Heart left ventricle (tissue), 16 donors: ENCODE measurements at regions of chr2 and their contacts with region 1.

Region 1: GRCh38 chr2:25041928-25042320 is at the start of gene EFR3B:
- DNase-seq: peak; percentile 96 to 98 (median 97)
- ATAC-seq: peak; percentile 97 to 99 (median 98)
- H3K4me3 ChIP-seq: peak within 1 kb of the TSS; percentile 56 to 97 (median 84)
- H3K27ac ChIP-seq: peak within 1 kb of the TSS; percentile 71 to 92 (median 88)
- H3K4me1 ChIP-seq: peaks cover 0 to 26% (median 17%) of the 10 kb centered on the region in 12 donors
- H3K27me3 ChIP-seq: peaks cover 0 to 13% (median 0%) of the 10 kb centered on the region in 9 donors
- CTCF ChIP-seq: peak in 4 of 12 donors; percentile 2 to 12 (median 10)
- POLR2A ChIP-seq: peak in 1 of 2 donors; percentile 67
- total RNA-seq, gene EFR3B: 4.3 to 13.8 (median 6.3) TPM

Region 2: DNA sequence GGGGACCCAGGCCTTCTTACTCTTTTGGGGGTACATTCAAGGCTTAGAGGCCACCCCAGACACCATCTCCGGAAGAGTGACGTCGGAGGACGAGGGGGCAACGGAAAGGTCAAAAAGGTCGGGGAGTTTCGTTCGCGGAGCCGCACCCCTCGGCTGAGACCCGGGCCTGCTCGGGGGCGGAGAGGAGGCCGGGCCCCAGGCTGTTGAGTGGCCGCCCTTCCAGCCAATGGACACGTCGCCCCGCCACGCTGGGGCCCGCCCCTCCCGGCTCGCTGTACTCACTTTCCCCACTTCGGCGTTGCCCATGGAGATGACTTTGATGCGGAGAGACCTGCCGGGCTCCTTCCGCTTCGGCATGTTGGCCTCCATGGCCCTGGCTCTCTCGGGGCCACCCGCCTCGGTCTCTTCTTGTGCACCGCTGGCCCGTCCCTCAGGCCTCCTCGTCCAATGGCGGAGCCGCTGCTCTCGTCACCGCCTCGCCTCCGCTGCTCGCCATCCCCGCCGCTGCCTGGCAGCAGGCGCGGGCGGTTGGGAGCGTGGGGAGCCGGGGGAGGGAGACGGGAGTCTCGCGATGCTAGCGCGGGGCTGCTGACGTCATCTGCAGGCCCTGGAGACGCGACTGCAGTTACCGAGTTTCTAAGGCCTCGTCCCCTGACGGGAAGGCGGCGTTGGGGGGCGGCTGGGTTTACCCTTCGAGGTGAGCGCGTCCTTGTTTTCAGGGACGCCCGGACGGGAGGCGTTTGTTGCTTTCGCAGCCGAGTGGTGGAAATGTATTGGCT is 70.2 kb before region 1 on chr2 and contains the start of gene DNAJC27:
- intact Hi-C with region 1: loop called in 6 of 10 experiments (anchors 2 to 5 kb)
- DNase-seq: peak; percentile 98 to 99 (median 99)
- ATAC-seq: peak; percentile 95 to 97 (median 96)
- H3K4me3 ChIP-seq: peak within 1 kb of the TSS; percentile 70 to 94 (median 82)
- H3K27ac ChIP-seq: peak within 1 kb of the TSS; percentile 95 to 99 (median 98)
- H3K4me1 ChIP-seq: peaks cover 0 to 23% (median 13%) of the 10 kb centered on the region in 12 donors
- H3K27me3 ChIP-seq: no peaks in the 10 kb centered on the region
- CTCF ChIP-seq: no peak
- POLR2A ChIP-seq: peak; percentile 53 to 95
- total RNA-seq, gene DNAJC27: 5.1 to 13.6 (median 9.1) TPM

Region 3: GRCh38 chr2:24977631-24978030 is 64.3 kb before region 1 on chr2:
- intact Hi-C with region 1: loop called in 7 of 10 experiments (anchors 2 to 5 kb)
- DNase-seq: no peak
- ATAC-seq: no peak
- H3K4me3 ChIP-seq: no peak overlapping the region
- H3K27ac ChIP-seq: no peak overlapping the region
- H3K4me1 ChIP-seq: peaks cover 0 to 18% (median 6%) of the 10 kb centered on the region in 12 donors
- H3K27me3 ChIP-seq: no peaks in the 10 kb centered on the region
- CTCF ChIP-seq: no peak
- POLR2A ChIP-seq: no peak

Region 4: GRCh38 chr2:24984912-24985311 is 57.0 kb before region 1 on chr2:
- intact Hi-C with region 1: loop called in 4 of 10 experiments (anchors 2 to 5 kb)
- DNase-seq: peak in 4 of 5 donors; percentile 61 to 80 (median 74)
- ATAC-seq: peak; percentile 74 to 95 (median 94)
- H3K4me3 ChIP-seq: no peak overlapping the region
- H3K27ac ChIP-seq: peak overlapping the region; percentile 14 to 76 (median 62)
- H3K4me1 ChIP-seq: peaks cover 0 to 27% (median 18%) of the 10 kb centered on the region in 12 donors
- H3K27me3 ChIP-seq: no peaks in the 10 kb centered on the region
- CTCF ChIP-seq: no peak
- POLR2A ChIP-seq: no peak

Region 5: DNA sequence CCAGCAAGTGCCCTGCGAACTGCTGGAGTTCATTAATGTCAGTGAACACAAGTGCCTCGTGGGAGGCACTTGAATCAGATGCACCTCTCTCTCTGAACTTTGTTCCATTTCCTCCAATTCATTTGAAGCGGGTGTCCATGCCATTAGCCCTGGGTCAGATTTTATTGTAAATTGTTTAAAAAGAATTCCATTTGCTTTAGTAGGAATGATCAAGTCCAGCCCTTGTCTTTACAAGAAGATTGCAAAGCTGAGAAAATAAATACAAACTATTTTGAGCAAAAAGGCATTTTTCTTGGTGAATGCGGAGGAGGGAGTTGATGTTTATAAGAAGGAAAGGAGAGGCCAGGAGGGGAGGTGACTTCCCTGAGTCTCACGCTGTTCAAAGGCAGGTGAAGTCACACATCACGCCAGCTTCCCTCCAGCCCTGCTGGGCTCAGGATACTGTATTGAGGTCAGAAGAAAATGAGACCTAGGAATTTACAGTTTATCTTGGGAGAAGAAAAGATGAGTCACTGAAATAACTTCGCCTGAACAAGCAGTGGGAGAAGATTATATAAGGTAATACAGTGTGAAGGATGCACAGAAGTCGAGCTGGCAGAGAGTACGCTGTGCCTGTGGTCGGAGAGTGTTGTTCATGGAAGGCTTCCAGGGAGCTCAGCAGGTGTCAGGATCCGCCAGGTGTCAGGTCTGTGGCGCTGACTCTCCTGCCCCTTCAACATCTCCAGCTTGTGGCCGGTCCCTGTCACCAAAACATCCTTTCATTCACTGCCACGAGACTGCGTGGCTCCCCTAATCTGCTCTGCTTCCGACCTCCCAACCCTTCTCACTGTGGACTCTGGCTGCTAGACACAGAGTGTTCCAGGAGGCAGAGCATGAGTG is 36.5 kb after region 1 on chr2:
- intact Hi-C with region 1: loop called in 1 of 10 experiments (anchors 5 kb)
- DNase-seq: peak in 2 of 5 donors; percentile 26 to 41
- ATAC-seq: peak; percentile 43 to 89 (median 68)
- H3K4me3 ChIP-seq: peak overlapping the region in 5 of 12 donors; percentile 5 to 24 (median 13)
- H3K27ac ChIP-seq: peak overlapping the region in 11 of 12 donors; percentile 23 to 73 (median 65)
- H3K4me1 ChIP-seq: peaks cover 3 to 57% (median 33%) of the 10 kb centered on the region in 12 donors
- H3K27me3 ChIP-seq: no peaks in the 10 kb centered on the region
- CTCF ChIP-seq: no peak
- POLR2A ChIP-seq: no peak

Region 6: DNA sequence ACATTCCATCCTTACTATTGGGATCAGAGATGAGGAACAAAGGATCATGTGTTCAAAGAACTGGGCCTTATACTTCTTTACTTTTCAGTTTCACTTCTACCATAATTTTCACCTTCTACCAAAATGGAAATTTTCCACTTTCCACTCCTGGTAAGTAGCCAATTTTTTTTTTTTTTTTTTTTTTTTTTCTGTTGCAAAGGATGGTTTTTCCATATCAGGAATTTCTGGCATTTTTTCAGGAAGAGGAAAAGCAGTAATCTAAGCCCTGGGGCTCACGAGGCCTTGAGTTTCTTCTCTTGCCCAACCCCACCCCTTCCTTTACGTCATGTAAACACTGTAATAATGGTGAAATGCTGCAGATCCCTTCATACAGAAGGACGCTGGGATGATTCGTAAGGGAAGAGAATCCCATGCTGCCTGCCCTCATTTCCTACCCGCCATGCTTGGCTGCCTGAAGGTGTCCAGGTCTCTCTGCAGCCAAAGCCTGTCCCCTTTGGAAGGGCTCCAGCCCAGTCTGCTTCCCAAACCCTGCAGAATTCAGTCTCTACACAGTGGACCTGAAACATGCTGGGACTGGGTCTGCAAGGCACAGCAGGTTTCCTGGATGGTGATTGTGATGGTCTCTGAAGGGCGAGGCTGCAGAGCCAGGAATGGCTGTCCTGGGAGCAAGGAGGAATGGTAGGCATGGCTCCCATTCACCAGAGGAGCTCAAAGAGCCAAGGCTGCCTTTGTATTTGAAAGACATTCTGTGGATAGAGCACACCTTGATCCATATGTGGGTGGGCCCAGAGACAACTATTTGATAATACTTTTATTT is 57.0 kb after region 1 on chr2:
- intact Hi-C with region 1: loop called in 2 of 10 experiments (anchors 10 kb)
- DNase-seq: peak in 4 of 5 donors; percentile 43 to 76 (median 56)
- ATAC-seq: peak; percentile 84 to 98 (median 90)
- H3K4me3 ChIP-seq: peak overlapping the region in 1 of 12 donors; percentile 9
- H3K27ac ChIP-seq: peak overlapping the region; percentile 56 to 87 (median 76)
- H3K4me1 ChIP-seq: peaks cover 0 to 23% (median 13%) of the 10 kb centered on the region in 12 donors
- H3K27me3 ChIP-seq: no peaks in the 10 kb centered on the region
- CTCF ChIP-seq: no peak
- POLR2A ChIP-seq: no peak